ENCODE measurements at regions of chr10 and their contacts with region 1.

Region 1: DNA sequence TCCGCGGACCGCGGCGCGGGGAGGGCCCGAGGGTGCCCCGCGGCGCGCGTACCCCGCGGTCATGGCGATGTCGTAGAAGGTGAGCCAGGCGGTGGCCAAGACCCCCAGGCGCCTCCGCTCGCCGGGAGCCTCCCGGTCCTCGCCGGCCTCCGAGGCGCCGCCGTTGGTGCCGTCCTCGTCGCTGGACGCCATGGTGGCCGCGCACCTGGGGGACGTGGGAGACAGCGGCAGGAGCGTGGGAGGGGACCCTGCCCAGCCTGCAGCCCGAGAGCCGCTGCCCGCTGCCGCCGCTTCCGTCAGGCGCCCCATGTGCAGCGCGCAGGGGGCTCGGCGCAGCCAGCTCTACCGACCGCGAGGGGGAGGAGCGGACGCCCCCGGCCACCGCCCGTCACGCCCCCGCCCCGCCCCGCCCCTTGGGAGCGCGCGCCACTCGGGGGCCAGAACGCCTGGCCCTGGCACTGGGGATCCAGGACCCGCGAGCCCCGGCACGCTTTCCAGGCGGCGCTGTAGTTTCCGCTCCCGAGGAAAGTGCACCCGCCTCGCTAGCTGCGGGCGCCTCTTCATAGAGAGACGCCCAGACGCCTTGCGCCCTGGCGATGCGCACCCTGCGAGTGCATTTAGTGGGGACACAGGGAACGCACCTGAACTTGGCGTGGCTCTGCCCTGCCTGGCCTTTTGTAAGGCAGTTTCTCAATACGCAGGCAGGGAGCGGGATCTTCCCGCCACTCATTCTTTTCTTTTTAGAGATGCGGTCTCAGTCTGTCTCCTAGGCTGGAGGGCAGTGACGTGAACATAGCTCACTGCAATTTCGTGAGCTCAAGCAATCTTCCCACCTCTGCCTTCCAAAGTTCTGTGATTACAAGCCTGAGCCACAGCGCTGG is at the start of gene HACD1:
- DNase-seq: peak; percentile 74
- ATAC-seq: peak; percentile 75
- H3K4me3 Mint-ChIP-seq: peak within 1 kb of the TSS; percentile 78
- H3K27ac Mint-ChIP-seq: peak within 1 kb of the TSS; percentile 55
- H3K4me1 Mint-ChIP-seq: peaks cover 5% of the 10 kb centered on the region
- H3K27me3 Mint-ChIP-seq: peaks cover 13% of the 10 kb centered on the region
- total RNA-seq, gene HACD1: 1.7 to 2.2 TPM

Region 2: GRCh38 chr10:17474595-17475323 is 142.5 kb before region 1 on chr10:
- CTCF ChIA-PET with region 1: no interaction called
- POLR2A ChIA-PET with region 1: no interaction called
- intact Hi-C with region 1: no loop called
- DNase-seq: no peak
- ATAC-seq: no peak
- H3K4me3 Mint-ChIP-seq: no peak overlapping the region
- H3K27ac Mint-ChIP-seq: no peak overlapping the region
- H3K4me1 Mint-ChIP-seq: peaks cover 6% of the 10 kb centered on the region
- H3K27me3 Mint-ChIP-seq: peaks cover 14% of the 10 kb centered on the region

Region 3: GRCh38 chr10:17669185-17669872 is 52.1 kb after region 1 on chr10:
- CTCF ChIA-PET with region 1: interaction called, 3 read pairs
- POLR2A ChIA-PET with region 1: no interaction called
- intact Hi-C with region 1: loop called in 1 of 2 experiments (anchors 1 kb)
- DNase-seq: peak; percentile 69
- ATAC-seq: peak; percentile 66
- H3K4me3 Mint-ChIP-seq: peak overlapping the region; percentile 67
- H3K27ac Mint-ChIP-seq: peak overlapping the region; percentile 88
- H3K4me1 Mint-ChIP-seq: peaks cover 57% of the 10 kb centered on the region
- H3K27me3 Mint-ChIP-seq: no peaks in the 10 kb centered on the region

Region 4: DNA sequence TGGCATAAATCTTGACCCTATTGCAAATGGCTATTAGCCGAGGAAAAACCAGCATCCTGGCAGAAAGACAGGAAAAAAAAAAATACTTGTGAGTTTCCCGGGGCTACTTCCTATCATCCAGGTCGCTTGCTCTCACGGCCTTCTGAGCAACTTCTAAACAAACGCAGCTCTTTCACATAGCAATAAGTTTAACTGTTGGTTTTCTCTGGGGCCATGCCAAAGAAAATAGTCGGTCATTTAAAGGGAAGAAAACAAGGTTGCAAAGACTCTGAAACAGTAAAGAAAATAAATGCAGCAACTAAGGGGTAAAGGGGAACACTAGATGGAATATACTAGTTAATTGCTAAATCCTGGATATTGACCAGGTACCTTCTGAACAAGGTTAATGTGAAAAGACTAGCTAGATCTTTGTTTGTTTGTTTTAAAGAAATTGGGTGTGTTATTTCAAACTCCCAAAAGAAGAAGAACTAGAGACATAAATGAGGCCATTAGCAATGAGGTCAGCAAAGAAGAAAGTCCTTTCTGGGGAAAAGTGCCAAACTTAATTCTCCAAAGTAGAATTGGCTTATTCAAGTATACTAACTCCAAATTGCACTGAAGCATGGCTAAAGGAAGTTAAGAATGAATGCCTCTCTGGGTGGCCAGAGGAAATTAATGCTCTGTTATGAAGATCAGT is 388.6 kb after region 1 on chr10:
- CTCF ChIA-PET with region 1: no interaction called
- POLR2A ChIA-PET with region 1: no interaction called
- intact Hi-C with region 1: no loop called
- DNase-seq: no peak
- ATAC-seq: no peak
- H3K4me3 Mint-ChIP-seq: no peak overlapping the region
- H3K27ac Mint-ChIP-seq: no peak overlapping the region
- H3K4me1 Mint-ChIP-seq: no peaks in the 10 kb centered on the region
- H3K27me3 Mint-ChIP-seq: peaks cover 4% of the 10 kb centered on the region

Measured in activated CD4-positive, alpha-beta T cell treated with anti-CD3 and anti-CD28 coated beads for 36 hours (primary cell).